Naive thymus-derived CD4-positive, alpha-beta T cell (primary cell): ENCODE measurements at regions of chrX and their contacts with region 1.

Region 1: GRCh38 chrX:64394874-64395567 is at the start of gene MTMR8:
- DNase-seq: peak; percentile 58 to 83 (median 78)
- ATAC-seq: peak; percentile 94
- H3K4me3 ChIP-seq: peak within 1 kb of the TSS; percentile 66
- H3K4me3 Mint-ChIP-seq: peak within 1 kb of the TSS; percentile 89 to 98 (median 94)
- H3K27ac ChIP-seq: peak within 1 kb of the TSS; percentile 66
- H3K27ac Mint-ChIP-seq: peak within 1 kb of the TSS; percentile 83 to 94 (median 91)
- H3K4me1 ChIP-seq: no peaks in the 10 kb centered on the region
- H3K4me1 Mint-ChIP-seq: peaks cover 15 to 54% (median 45%) of the 10 kb centered on the region in 7 donors
- H3K27me3 ChIP-seq: no peaks in the 10 kb centered on the region
- H3K27me3 Mint-ChIP-seq: no peaks in the 10 kb centered on the region
- total RNA-seq, gene MTMR8: 4.7 to 9.4 (median 7.2) TPM

Region 2: GRCh38 chrX:62923093-62923492 is 1471.9 kb before region 1 on chrX:
- CTCF ChIA-PET with region 1: no interaction called
- POLR2A ChIA-PET with region 1: no interaction called
- intact Hi-C with region 1: no loop called
- DNase-seq: no peak
- ATAC-seq: no peak
- H3K4me3 ChIP-seq: no peak overlapping the region
- H3K4me3 Mint-ChIP-seq: no peak overlapping the region
- H3K27ac ChIP-seq: no peak overlapping the region
- H3K27ac Mint-ChIP-seq: no peak overlapping the region
- H3K4me1 ChIP-seq: no peaks in the 10 kb centered on the region
- H3K4me1 Mint-ChIP-seq: no peaks in the 10 kb centered on the region
- H3K27me3 ChIP-seq: no peaks in the 10 kb centered on the region
- H3K27me3 Mint-ChIP-seq: no peaks in the 10 kb centered on the region

Region 3: DNA sequence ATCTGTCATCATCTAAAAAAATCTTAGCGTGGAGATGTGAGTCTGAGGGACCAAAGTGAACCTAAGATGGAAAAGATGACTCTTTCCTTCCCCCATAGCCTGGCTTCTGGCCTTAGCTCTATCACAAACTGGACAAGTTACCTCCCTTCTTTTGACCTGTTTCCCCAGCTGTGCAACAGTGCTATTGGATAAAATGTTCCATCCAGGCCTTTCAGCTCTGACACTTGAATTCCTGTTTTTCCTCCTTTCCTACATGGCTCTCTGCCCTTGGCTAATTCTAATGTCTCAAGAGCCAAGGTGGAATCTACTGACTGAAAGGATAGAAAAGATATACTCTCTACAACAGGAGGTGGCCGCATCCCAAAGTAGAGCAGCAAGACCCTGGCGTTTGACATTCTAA is 525.5 kb before region 1 on chrX:
- CTCF ChIA-PET with region 1: no interaction called
- POLR2A ChIA-PET with region 1: no interaction called
- intact Hi-C with region 1: no loop called
- DNase-seq: no peak
- ATAC-seq: no peak
- H3K4me3 ChIP-seq: no peak overlapping the region
- H3K4me3 Mint-ChIP-seq: peak overlapping the region in 1 of 10 donors; percentile 5
- H3K27ac ChIP-seq: no peak overlapping the region
- H3K27ac Mint-ChIP-seq: no peak overlapping the region
- H3K4me1 ChIP-seq: no peaks in the 10 kb centered on the region
- H3K4me1 Mint-ChIP-seq: no peaks in the 10 kb centered on the region
- H3K27me3 ChIP-seq: no peaks in the 10 kb centered on the region
- H3K27me3 Mint-ChIP-seq: no peaks in the 10 kb centered on the region

Region 4: GRCh38 chrX:64205735-64206491 is 189.1 kb before region 1 on chrX:
- CTCF ChIA-PET with region 1: no interaction called
- POLR2A ChIA-PET with region 1: no interaction called
- intact Hi-C with region 1: loop called (anchors 1 kb)
- DNase-seq: peak; percentile 70 to 88 (median 86)
- ATAC-seq: peak; percentile 95
- H3K4me3 ChIP-seq: peak overlapping the region; percentile 71
- H3K4me3 Mint-ChIP-seq: peak overlapping the region; percentile 83 to 94 (median 90)
- H3K27ac ChIP-seq: peak overlapping the region; percentile 77
- H3K27ac Mint-ChIP-seq: peak overlapping the region; percentile 82 to 95 (median 93)
- H3K4me1 ChIP-seq: peaks cover 6 to 7% of the 10 kb centered on the region in 2 donors
- H3K4me1 Mint-ChIP-seq: peaks cover 9 to 25% (median 13%) of the 10 kb centered on the region in 7 donors
- H3K27me3 ChIP-seq: no peaks in the 10 kb centered on the region
- H3K27me3 Mint-ChIP-seq: no peaks in the 10 kb centered on the region

Region 5: DNA sequence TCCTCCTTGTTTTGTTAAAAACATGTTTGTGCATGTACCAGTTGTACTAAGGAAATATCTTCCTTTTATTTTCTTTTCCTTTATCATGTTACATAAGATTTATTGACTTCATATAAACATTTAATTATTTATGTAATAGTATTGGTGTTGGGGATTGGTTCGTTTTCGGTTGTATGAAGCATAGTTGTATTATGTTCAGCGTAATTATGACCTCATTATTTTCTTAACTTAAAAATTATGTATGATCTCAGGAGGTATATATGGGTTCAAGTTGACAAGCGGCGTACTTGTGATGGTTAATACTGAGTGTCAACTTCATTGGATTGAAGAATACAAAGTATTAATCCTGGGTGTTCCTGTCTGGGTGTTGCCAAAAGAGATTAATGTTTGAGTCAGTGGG is 236.7 kb after region 1 on chrX:
- CTCF ChIA-PET with region 1: no interaction called
- POLR2A ChIA-PET with region 1: no interaction called
- intact Hi-C with region 1: no loop called
- DNase-seq: no peak
- ATAC-seq: no peak
- H3K4me3 ChIP-seq: no peak overlapping the region
- H3K4me3 Mint-ChIP-seq: no peak overlapping the region
- H3K27ac ChIP-seq: no peak overlapping the region
- H3K27ac Mint-ChIP-seq: no peak overlapping the region
- H3K4me1 ChIP-seq: no peaks in the 10 kb centered on the region
- H3K4me1 Mint-ChIP-seq: no peaks in the 10 kb centered on the region
- H3K27me3 ChIP-seq: no peaks in the 10 kb centered on the region
- H3K27me3 Mint-ChIP-seq: no peaks in the 10 kb centered on the region

Region 6: DNA sequence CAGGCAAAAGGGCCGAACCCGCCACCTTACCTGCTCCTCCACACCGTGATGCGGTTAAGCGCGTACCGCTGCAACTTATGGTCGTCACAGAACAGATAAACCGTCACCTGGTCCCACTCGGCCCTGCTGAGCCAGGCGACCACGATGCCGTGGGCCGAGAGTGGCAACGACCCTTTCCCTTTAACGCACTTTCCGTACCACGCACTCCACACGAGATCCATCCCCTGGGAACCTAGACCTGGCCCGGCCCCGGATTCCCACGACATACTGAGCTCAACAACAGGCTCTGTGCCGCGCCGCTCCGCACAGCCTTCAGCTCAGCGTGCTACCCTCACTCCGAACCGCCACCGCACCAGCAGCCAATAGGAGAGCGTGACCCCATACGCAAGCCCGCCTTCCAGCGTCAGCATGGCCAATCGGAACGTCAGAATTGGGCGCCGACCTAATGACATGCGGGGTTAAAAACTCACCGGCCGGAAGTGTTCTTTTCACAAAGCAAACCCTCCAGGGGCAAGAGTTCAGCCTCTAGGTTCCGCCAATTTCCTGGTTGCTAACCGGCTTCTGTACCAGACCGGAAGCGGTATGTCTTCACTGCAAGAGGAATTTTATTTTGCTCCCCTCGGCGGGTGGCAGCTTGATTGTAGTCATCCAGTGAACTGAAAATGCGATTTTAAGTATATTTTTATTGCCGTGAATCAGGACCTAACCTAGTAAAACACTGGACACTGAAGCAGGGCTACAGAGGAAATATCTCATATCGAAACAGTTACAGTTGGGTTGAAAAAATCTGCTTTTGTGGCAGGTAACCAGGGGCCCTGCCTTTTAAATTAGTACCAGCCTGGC is 1139.7 kb after region 1 on chrX and contains the start of gene LAS1L:
- CTCF ChIA-PET with region 1: no interaction called
- POLR2A ChIA-PET with region 1: interaction called, 5 read pairs
- intact Hi-C with region 1: loop called (anchors 1 kb)
- DNase-seq: peak; percentile 71 to 94 (median 90)
- ATAC-seq: peak; percentile 99
- H3K4me3 ChIP-seq: peak within 1 kb of the TSS; percentile 96
- H3K4me3 Mint-ChIP-seq: peak within 1 kb of the TSS; percentile 97 to 100 (median 100)
- H3K27ac ChIP-seq: peak within 1 kb of the TSS; percentile 75
- H3K27ac Mint-ChIP-seq: peak within 1 kb of the TSS; percentile 94 to 100 (median 98)
- H3K4me1 ChIP-seq: peaks cover 10 to 13% of the 10 kb centered on the region in 2 donors
- H3K4me1 Mint-ChIP-seq: peaks cover 5 to 28% (median 16%) of the 10 kb centered on the region in 7 donors
- H3K27me3 ChIP-seq: no peaks in the 10 kb centered on the region
- H3K27me3 Mint-ChIP-seq: no peaks in the 10 kb centered on the region
- total RNA-seq, gene LAS1L: 37.2 to 48.9 (median 44.9) TPM